ENCODE measurements at regions of chr21 and their contacts with region 1.

Region 1: DNA sequence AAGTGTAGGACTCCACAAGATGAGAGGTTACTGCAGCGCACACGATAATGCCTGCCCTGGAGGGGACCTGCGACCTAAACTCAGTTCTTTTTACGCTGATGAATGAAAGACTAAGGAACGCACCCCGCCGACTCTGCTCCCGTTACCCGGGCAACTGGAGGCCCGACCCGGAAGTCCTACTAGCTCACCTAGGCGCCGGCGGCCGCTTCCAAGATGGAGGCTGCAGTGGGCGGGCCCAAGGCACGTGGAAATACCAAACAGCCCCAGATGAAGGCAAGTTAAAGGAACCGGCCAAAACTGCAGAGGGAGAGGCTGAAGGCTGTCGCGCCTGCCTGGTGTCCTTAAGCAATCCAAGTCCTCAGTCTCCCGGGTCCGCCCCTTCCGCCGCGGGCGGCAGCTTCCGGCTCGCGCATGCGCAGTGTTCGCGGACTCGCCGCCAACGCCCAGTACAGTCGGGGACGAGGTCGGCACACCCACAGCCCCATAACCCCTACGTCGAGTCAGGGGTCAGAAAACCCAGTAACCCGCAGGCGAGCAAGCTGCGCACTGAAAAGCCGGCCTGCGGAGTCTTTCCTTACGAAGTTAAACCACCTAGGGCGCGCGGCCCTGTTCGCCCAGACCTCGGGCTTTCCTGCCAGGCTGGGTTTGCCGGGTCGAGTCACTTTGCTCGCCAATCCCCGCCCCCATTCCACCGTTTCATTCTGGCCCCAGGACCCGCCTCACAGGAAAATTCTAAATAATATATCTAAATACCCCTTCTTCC is at the start of gene SETD4:
- DNase-seq: peak; percentile 93
- ATAC-seq: peak; percentile 91
- H3K4me3 Mint-ChIP-seq: peak within 1 kb of the TSS; percentile 91
- H3K27ac Mint-ChIP-seq: peak within 1 kb of the TSS; percentile 92
- H3K4me1 Mint-ChIP-seq: peaks cover 26% of the 10 kb centered on the region
- H3K27me3 Mint-ChIP-seq: no peaks in the 10 kb centered on the region; the same call in 1 of the 2 replicates
- CTCF ChIP-seq: no peak
- total RNA-seq, gene SETD4: 44.1 to 64.8 TPM (median 45.7 TPM) in 3 replicates

Region 2: GRCh38 chr21:35963920-35964451 is 96.4 kb before region 1 on chr21:
- CTCF ChIA-PET with region 1: no interaction called
- POLR2A ChIA-PET with region 1: no interaction called
- DNase-seq: peak; percentile 21
- ATAC-seq: peak; percentile 89
- H3K4me3 Mint-ChIP-seq: no peak overlapping the region
- H3K27ac Mint-ChIP-seq: no peak overlapping the region
- H3K4me1 Mint-ChIP-seq: 0 out of 2 replicates have a peak, but pooled peaks cover 3% of the 10 kb centered on the region
- H3K27me3 Mint-ChIP-seq: no peaks in the 10 kb centered on the region; the same call in 1 of the 2 replicates
- CTCF ChIP-seq: no peak

Region 3: DNA sequence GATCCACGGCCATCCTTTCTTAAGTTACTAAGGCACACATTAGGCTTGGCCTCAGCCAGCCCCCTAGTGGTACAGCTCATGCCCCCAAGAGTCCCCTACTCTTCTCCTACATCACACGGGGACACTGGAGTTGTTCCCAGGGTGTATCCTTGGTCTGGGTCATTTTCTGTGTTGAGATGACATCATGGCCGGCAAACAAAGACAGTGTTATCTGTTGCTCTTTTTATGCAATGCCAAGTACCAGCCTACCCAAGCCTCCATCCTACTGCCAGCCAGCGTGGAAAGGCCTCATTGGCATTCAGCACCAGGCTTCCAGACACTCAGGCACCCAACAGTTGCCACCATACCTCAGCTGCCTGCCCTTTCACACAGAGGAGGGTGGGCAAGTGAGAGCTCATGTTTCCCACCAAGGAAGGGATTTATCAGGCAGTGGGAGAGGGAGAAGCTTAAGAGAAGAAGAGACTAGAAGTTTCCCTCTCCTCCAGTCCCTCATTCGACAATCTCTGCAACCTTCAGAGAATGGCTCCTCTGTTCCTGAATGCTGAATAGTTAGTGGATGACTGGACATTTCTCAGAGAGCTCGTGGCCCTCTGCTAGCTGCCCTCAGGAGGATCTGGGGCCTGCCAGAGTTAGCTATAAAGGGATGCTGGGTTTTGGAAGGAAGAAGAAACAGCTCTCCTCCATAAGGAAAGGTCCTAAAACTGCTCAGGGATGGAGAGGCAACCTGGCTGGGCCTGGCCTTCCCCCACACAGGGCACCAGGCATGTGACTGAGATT is 27.2 kb after region 1 on chr21:
- CTCF ChIA-PET with region 1: interaction called, 14 read pairs
- POLR2A ChIA-PET with region 1: no interaction called
- DNase-seq: no peak
- ATAC-seq: peak; percentile 97
- H3K4me3 Mint-ChIP-seq: no peak overlapping the region
- H3K27ac Mint-ChIP-seq: 0 out of 2 replicates have a peak overlapping the region, but pooled peaks have one; percentile 15
- H3K4me1 Mint-ChIP-seq: peaks cover 18% of the 10 kb centered on the region
- H3K27me3 Mint-ChIP-seq: no peaks in the 10 kb centered on the region
- CTCF ChIP-seq: no peak; the same call in 1 of the 2 replicates

Region 4: GRCh38 chr21:36097266-36098230 is 37.2 kb after region 1 on chr21:
- CTCF ChIA-PET with region 1: interaction called, 6 read pairs
- POLR2A ChIA-PET with region 1: interaction called, 11 read pairs
- DNase-seq: no peak
- ATAC-seq: peak; percentile 42
- H3K4me3 Mint-ChIP-seq: peak overlapping the region; percentile 26
- H3K27ac Mint-ChIP-seq: peak overlapping the region; percentile 95
- H3K4me1 Mint-ChIP-seq: peaks cover 73% of the 10 kb centered on the region
- H3K27me3 Mint-ChIP-seq: peaks cover 8% of the 10 kb centered on the region
- CTCF ChIP-seq: no peak

Region 5: GRCh38 chr21:36104317-36105300 is 44.3 kb after region 1 on chr21:
- CTCF ChIA-PET with region 1: interaction called, 35 read pairs
- POLR2A ChIA-PET with region 1: interaction called, 9 read pairs
- DNase-seq: peak; percentile 88
- ATAC-seq: peak; percentile 79
- H3K4me3 Mint-ChIP-seq: peak overlapping the region; percentile 92
- H3K27ac Mint-ChIP-seq: peak overlapping the region; percentile 95
- H3K4me1 Mint-ChIP-seq: peaks cover 84% of the 10 kb centered on the region
- H3K27me3 Mint-ChIP-seq: no peaks in the 10 kb centered on the region
- CTCF ChIP-seq: peak; percentile 64

Region 6: DNA sequence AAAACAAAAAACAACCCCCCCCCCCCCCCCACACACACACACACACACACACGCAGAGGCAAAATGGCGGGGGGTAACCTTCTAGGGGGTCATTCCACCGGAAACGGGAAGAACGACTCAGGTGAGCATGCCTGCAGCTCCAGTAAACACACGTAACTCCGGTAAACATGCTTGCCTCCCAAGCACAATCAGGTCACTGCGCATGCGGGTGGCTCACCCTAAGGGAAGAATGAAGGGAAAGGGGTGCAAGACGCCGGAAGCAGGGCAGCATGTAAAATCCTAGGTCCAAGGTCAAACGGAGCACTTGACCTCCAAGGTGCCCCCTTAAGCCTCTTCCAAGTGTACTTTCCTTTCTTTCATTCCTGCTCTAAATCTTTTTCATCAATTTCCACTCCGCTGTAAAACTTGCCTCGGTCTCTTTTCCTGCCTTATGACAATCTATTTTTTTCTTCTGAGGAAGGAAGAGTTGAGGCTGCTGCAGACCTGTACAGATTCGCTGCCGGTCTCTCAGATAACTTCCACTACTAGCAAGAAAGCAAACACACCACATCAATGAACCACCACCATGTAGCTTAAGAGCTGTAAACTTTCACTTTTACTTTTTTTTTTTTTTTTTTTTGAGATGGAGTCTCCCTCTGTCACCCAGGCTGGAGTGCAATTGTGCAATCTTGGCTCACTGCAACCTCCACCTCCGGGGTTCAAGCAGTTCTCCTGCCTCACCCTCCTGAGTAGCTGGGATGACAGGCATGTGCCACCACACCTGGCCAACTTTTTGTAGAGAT is 53.5 kb after region 1 on chr21:
- CTCF ChIA-PET with region 1: interaction called, 13 read pairs
- POLR2A ChIA-PET with region 1: no interaction called
- DNase-seq: no peak
- ATAC-seq: no peak
- H3K4me3 Mint-ChIP-seq: no peak overlapping the region
- H3K27ac Mint-ChIP-seq: peak overlapping the region; percentile 81; the same call in 1 of the 2 replicates
- H3K4me1 Mint-ChIP-seq: peaks cover 47% of the 10 kb centered on the region
- H3K27me3 Mint-ChIP-seq: no peaks in the 10 kb centered on the region
- CTCF ChIP-seq: no peak